Posterior vena cava (tissue), 2 donors: ENCODE measurements at regions of chr5 and their contacts with region 1.

Region 1: GRCh38 chr5:54443270-54443669 is 12.2 kb upstream of the HSPB3 start:
- DNase-seq: no peak

Region 2: DNA sequence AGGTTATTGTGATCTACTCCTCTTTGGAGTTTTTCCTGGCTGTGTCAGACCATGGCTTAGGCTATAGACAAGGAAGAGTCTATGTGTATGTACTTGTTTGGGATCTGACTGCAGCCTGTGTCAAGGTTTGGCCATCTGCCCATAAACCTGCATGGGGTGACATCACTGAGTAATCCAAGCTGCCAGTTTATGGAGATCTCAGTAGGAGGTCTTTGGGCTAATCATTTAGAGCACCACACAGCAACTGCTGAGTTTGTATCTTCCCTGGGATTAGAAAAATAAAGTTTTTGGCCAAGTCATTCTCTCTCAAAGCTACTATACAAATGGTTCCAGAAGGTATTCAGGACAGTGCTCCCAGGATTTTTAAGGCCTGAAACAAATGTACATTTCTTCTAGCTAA is 53.3 kb before region 1 on chr5:
- intact Hi-C with region 1: no loop called
- DNase-seq: no peak

Region 3: DNA sequence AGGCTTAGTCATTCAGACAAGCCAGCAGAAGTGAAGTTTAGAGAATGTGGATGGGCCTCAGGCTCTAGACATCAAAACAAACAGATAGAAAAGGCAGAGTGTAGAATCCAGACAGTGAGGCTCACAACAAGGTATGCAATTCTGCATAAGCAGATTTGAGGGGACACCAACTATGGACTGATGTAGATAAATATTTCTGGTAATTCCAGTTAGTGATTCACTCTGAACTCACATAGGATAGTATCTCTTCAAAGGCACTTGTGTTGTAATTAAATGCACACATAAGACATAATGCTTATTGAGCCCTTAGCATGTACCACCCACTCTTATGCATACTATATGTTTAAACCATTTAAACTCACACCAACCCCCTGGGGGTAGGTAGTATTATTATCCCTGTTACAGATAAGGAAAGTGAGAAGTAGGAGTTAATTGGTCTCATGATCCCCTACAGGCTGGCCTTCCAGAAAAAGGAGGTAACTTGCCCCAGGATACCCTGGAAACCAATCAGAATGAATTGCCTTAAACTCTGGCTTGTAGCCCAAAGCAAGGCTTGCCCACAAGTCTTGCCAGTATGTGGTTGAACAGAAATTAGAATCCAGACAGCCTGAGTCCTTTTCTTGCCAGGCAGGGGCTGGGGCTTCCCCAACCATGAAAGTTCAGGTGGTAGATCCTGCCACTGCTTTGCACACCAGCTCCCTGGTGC is 27.2 kb before region 1 on chr5:
- intact Hi-C with region 1: no loop called
- DNase-seq: no peak

Region 4: DNA sequence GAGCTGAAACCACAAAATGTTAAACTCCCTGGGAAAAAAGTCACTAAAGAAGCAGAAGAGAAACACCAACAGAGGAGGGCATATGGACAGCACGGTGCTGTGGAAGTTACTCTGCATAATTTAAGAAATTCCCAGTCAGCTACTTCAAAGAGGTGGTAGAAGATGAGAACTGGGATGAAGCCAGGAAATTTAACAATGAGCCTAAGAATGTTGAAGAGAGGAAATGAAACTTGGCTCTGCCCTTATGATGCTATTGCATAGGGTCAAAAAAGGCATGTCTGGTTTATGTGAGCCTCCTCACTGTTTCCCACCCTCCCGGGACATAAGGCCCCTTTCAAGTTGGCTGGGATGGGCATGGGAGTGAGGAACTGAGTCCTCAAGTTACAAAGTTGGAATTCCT is 48.9 kb after region 1 on chr5:
- intact Hi-C with region 1: loop called in 1 of 2 experiments (anchors 10 kb)
- DNase-seq: no peak

Region 5: GRCh38 chr5:54646356-54647101 is 203.3 kb after region 1 on chr5:
- intact Hi-C with region 1: loop called in 1 of 2 experiments (anchors 10 kb)
- DNase-seq: peak; percentile 90